ENCODE measurements at regions of chr6 and their contacts with region 1.

Region 1: DNA sequence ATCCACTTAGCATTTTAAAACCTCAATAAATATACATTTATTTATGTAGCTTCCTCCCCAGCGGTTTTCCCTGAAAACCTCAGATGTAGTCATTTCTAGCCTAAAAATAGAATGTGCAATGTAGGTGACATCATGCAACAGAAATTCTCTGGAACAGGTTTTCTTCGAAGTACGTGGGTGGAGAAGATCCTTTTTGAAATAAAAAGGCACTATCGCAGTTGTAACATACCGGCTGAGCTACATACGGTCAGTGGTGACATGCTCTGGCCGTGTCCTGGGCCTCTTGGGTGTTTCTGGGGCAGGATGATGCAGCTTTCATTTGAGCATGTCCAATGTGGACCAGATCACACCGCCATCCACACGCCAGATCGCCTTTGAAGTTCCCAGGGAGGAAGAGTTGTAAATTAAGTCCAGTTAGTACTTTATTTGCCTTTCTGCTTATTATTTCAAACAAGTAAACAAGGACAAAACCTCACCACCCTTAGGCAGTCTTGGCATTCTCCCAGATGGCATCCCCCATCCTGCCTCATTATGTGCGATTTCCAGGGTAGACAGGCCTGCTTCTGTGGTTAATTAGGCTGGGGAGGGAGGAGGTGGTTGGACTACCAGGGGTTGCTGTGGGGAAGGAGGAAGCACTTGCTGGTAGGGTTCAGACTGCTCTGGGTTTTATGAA is 109.5 kb upstream of the CLDN20 start:
- DNase-seq: peak; percentile 62
- ATAC-seq: peak; percentile 61
- H3K4me3 Mint-ChIP-seq: peak overlapping the region; percentile 35
- H3K27ac Mint-ChIP-seq: peak overlapping the region; percentile 91
- H3K4me1 Mint-ChIP-seq: peaks cover 78% of the 10 kb centered on the region
- H3K27me3 Mint-ChIP-seq: peaks cover 3% of the 10 kb centered on the region

Region 2: GRCh38 chr6:154197196-154197860 is 957.0 kb before region 1 on chr6:
- CTCF ChIA-PET with region 1: no interaction called
- POLR2A ChIA-PET with region 1: no interaction called
- intact Hi-C with region 1: no loop called
- DNase-seq: no peak
- ATAC-seq: peak; percentile 65
- H3K4me3 Mint-ChIP-seq: no peak overlapping the region
- H3K27ac Mint-ChIP-seq: no peak overlapping the region
- H3K4me1 Mint-ChIP-seq: peaks cover 48% of the 10 kb centered on the region
- H3K27me3 Mint-ChIP-seq: no peaks in the 10 kb centered on the region

Region 3: DNA sequence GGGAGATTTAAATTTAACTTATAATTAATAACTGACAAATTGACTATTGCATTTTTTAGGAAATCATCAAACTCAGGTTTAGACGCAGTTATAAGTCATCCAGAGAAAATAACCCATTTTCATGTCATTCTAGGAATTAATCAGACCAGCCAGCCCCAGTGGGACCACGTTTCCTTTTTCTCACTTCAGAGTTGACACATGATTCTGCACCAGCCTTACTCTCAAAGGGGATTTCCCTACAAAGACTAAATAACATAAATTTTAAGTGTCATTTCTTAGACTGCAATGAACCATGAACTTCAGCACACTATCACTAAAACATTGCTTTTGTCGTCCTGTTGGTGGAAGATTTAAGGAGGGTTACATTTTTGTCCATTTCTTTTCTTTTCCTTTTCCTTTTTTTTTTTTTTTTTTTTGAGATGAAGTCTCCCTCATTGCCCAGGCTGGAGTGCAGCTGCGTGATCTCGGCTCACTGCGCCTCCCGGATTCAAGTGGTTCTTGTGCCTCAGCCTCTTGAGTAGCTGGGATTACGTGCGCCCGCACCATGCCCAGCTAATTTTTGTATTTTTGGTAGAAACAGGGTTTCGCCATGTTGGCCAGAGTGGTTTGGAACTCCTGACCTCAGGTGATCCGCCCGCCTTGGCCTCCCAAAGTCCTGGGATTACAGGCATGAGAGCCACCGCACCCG is 801.3 kb before region 1 on chr6:
- CTCF ChIA-PET with region 1: no interaction called
- POLR2A ChIA-PET with region 1: no interaction called
- intact Hi-C with region 1: loop called in 1 of 2 experiments (anchors 10 kb)
- DNase-seq: peak; percentile 78
- ATAC-seq: peak; percentile 85
- H3K4me3 Mint-ChIP-seq: no peak overlapping the region
- H3K27ac Mint-ChIP-seq: no peak overlapping the region
- H3K4me1 Mint-ChIP-seq: peaks cover 29% of the 10 kb centered on the region
- H3K27me3 Mint-ChIP-seq: peaks cover 35% of the 10 kb centered on the region

Region 4: DNA sequence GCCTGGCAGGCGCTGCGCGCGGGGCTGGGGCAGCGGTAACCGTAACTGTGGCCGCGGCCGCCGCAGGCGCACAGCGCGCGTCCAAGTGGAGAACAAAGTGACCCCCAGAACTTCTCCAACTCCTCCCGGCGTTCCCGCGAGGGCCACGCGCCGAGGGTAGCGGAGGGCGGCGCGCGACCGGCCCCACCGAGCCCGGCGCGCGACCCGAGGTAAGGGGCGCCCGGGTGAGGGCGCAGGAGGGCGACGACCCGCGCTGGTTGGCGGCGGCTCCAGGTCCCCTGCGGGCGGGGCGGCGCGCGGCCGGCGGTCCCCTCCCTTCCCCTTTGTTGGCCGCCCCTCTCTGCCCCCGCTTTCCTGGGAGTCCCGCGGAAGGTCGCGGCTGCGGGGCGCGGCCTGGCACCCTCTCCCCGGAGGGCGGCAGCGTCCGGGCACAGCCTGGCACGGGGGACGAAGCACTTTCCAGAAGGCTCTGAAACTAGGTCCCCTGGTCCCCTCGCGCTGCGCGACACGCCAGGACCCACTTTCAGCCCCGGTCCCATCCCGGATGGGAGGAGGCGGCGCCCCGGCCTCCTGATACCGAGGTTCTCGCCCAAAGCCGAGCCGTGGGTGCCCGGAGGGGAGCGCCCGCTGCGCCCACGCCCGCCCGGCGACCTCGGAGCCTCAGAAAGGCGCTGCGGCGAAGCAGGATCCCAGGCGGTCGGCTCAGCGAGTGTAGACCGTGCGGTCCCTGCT is 158.8 kb before region 1 on chr6 and contains the start of gene TIAM2:
- CTCF ChIA-PET with region 1: no interaction called
- POLR2A ChIA-PET with region 1: no interaction called
- intact Hi-C with region 1: loop called in 1 of 2 experiments (anchors 5 kb)
- DNase-seq: peak; percentile 59
- ATAC-seq: peak; percentile 71
- H3K4me3 Mint-ChIP-seq: peak within 1 kb of the TSS; percentile 65
- H3K27ac Mint-ChIP-seq: no peak within 1 kb of the TSS
- H3K4me1 Mint-ChIP-seq: peaks cover 11% of the 10 kb centered on the region
- H3K27me3 Mint-ChIP-seq: peaks cover 36% of the 10 kb centered on the region
- total RNA-seq, gene TIAM2: 10.4 to 12.0 TPM

Region 5: DNA sequence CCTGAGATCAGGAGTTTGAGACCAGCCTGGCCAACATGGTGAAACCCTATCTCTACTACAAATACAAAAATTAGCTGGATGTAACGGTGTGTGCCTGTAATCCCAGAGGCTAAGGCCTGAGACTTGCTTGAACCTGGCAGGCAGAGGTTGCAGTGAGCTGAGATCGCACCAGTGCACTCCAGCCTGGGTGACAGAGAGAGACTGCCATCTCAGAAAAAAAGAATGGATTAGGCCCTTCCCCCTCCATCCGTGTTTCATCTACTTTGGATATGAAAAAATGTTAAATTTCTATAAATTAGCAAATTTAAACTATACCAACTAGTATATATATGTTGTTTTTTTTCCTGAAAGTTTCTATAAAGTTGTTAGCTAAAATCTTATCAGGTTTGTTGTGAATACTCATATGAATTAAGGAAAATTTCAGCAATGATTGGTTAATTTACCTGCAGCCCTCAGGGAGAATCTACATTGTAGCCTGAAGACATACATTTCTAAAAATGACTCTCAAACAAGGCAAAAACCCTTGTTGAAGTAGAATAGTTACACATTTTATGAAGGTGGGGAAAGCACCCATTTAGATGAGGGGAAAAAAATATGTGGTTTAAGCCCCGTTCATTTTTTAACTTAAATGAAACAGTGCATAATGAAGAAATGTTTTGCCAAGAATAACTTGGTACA is 38.3 kb before region 1 on chr6:
- CTCF ChIA-PET with region 1: interaction called, 4 read pairs
- POLR2A ChIA-PET with region 1: no interaction called
- intact Hi-C with region 1: loop called in 1 of 2 experiments (anchors 1 kb)
- DNase-seq: no peak
- ATAC-seq: peak; percentile 94
- H3K4me3 Mint-ChIP-seq: peak overlapping the region; percentile 5
- H3K27ac Mint-ChIP-seq: peak overlapping the region; percentile 70
- H3K4me1 Mint-ChIP-seq: peaks cover 27% of the 10 kb centered on the region
- H3K27me3 Mint-ChIP-seq: peaks cover 3% of the 10 kb centered on the region

Region 6: GRCh38 chr6:155188707-155189496 is 34.6 kb after region 1 on chr6:
- CTCF ChIA-PET with region 1: interaction called, 5 read pairs
- POLR2A ChIA-PET with region 1: interaction called, 3 read pairs
- intact Hi-C with region 1: loop called in 1 of 2 experiments (anchors 1 kb)
- DNase-seq: no peak
- ATAC-seq: peak; percentile 16
- H3K4me3 Mint-ChIP-seq: no peak overlapping the region
- H3K27ac Mint-ChIP-seq: peak overlapping the region; percentile 55
- H3K4me1 Mint-ChIP-seq: peaks cover 48% of the 10 kb centered on the region
- H3K27me3 Mint-ChIP-seq: no peaks in the 10 kb centered on the region

Region 7: DNA sequence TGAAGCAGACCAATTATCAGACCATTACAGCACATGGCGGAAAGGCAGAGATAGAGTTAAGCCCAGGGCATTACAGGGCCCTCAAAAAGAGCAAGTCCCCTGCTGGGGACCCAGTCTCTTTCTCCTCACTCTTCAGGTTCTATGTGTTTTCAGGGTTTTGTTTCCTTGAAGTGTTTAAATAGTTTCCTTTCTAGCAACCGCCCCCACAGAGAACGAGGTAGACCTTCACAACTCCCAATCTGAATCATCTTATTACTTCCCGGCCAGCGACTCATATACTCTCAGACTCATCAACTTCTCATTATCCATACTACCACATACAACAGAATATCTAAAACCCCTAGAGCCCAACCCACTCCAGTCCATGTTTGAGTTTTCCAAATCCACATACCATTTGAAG is 1096.3 kb after region 1 on chr6:
- CTCF ChIA-PET with region 1: no interaction called
- POLR2A ChIA-PET with region 1: no interaction called
- intact Hi-C with region 1: no loop called
- DNase-seq: peak; percentile 74
- ATAC-seq: peak; percentile 97
- H3K4me3 Mint-ChIP-seq: no peak overlapping the region
- H3K27ac Mint-ChIP-seq: peak overlapping the region; percentile 97
- H3K4me1 Mint-ChIP-seq: peaks cover 29% of the 10 kb centered on the region
- H3K27me3 Mint-ChIP-seq: peaks cover 4% of the 10 kb centered on the region